ENCODE measurements at regions of chr10 and their contacts with region 1.

Region 1: DNA sequence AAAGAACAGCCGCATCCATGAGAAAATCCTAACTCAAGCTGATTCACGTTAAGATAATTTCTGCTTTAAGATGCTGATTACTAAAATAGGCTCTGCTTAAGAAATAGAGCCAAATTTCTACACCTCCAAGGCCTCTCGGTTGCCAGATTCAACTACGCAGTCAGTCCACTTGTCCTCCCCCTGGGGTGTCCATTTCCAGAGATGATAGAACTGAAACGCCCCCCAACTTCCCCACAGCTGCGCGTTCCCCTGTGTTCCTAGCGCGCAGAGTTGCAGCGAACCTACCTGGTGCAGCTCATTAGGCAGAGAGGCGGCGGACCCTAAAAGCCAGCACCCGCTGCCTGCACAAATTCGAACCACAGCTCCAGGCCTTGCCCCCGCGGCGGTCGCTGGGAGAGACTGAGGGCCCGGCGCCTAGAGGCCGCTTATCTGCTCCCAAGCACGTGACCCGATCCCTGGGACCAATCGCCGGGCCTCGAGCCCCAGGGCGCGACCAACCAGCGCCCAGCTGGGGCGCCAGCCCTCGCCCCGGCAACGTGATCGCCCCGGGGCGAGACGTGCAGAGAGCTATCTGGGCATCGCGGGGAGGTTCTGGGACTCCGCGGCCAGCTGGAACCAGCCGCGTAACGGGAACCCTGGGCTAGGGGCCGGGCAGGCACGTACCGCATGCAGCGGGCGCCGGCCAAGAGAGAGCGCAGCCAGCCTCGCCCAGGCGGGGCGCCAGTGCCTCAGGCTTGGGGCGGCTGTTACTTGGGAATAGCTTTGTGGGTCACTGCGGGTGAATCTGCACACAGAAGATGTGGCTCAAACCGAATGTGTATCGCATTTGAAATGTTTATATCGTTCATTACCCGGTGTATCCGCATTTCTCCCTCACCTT is at the start of gene PPP1R3C:
- DNase-seq: peak; percentile 92 to 97 (median 94)
- H3K4me3 ChIP-seq: peak within 1 kb of the TSS; percentile 75 to 87 (median 81)
- H3K27ac ChIP-seq: peak within 1 kb of the TSS; percentile 65 to 71
- H3K4me1 ChIP-seq: peaks cover 0 to 6% (median 0%) of the 10 kb centered on the region in 3 donors
- H3K27me3 ChIP-seq: no peaks in the 10 kb centered on the region
- CTCF ChIP-seq: no peak
- total RNA-seq, gene PPP1R3C: 20.3 TPM

Region 2: GRCh38 chr10:91493313-91493712 is 139.6 kb before region 1 on chr10:
- intact Hi-C with region 1: loop called (anchors 10 kb)
- DNase-seq: peak in 2 of 5 donors; percentile 19 to 31
- H3K4me3 ChIP-seq: no peak overlapping the region
- H3K27ac ChIP-seq: no peak overlapping the region
- H3K4me1 ChIP-seq: no peaks in the 10 kb centered on the region
- H3K27me3 ChIP-seq: no peaks in the 10 kb centered on the region
- CTCF ChIP-seq: peak; percentile 29

Region 3: DNA sequence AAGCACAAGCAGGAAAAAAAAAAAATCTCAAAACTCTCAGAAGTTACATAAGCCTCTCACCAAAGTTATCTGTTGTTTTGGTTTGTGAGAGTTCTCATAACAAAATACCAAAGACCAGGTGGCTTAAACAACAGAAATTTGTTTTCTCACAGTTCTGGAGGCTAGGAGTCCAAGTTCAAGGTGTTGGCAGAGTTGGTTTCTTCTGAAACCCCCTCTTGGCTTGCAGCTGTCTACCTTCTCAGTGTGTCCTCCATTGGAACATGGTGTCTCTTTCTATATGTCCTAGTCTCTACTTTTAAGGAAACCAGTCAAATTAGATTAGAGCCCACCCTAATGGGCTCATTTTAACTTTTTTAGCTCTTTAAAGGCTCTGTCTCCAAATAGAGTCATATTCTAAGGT is 210.2 kb after region 1 on chr10:
- intact Hi-C with region 1: no loop called
- DNase-seq: no peak
- H3K4me3 ChIP-seq: no peak overlapping the region
- H3K27ac ChIP-seq: no peak overlapping the region
- H3K4me1 ChIP-seq: no peaks in the 10 kb centered on the region
- H3K27me3 ChIP-seq: no peaks in the 10 kb centered on the region
- CTCF ChIP-seq: no peak

Measured in kidney (tissue), 22 donors.